ENCODE measurements at regions of chr16 and their contacts with region 1.

Region 1: GRCh38 chr16:7013990-7014389 is 318.7 kb upstream of the RBFOX1 start:
- DNase-seq: no peak
- H3K4me3 ChIP-seq: no peak overlapping the region
- H3K27ac ChIP-seq: no peak overlapping the region
- H3K4me1 ChIP-seq: no peaks in the 10 kb centered on the region
- H3K27me3 ChIP-seq: no peaks in the 10 kb centered on the region
- CTCF ChIP-seq: no peak
- POLR2A ChIP-seq: no peak

Region 2: GRCh38 chr16:6725634-6726331 is 288.2 kb before region 1 on chr16:
- intact Hi-C with region 1: loop called (anchors 10 kb)
- DNase-seq: no peak
- H3K4me3 ChIP-seq: no peak overlapping the region
- H3K27ac ChIP-seq: no peak overlapping the region
- H3K4me1 ChIP-seq: peaks cover 4 to 6% of the 10 kb centered on the region in 2 donors
- H3K27me3 ChIP-seq: no peaks in the 10 kb centered on the region
- CTCF ChIP-seq: peak in 3 of 6 experiments; percentile 48 to 59 (median 57)
- POLR2A ChIP-seq: no peak

Region 3: DNA sequence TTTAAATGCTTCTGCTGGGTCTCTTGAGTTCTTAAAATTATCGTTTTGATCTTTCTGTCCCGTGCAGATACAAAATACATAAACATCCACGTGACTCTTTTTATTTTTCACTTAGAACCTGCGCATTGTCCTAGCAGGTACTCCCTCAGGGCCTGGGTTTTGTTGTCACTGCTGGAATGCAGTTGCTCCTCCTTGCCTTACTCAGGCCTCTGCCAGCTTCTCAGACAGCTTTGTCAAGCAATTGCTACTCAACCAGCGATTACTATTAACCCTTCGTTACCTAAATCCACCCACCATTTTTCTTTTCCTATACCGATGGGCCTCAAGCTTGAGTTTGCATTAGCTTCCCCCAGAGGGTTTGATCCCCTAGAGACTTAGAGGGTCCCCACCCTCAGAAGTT is 87.2 kb before region 1 on chr16:
- intact Hi-C with region 1: no loop called
- DNase-seq: peak in 1 of 2 donors; percentile 41
- H3K4me3 ChIP-seq: no peak overlapping the region
- H3K27ac ChIP-seq: no peak overlapping the region
- H3K4me1 ChIP-seq: peaks cover 4 to 6% of the 10 kb centered on the region in 2 donors
- H3K27me3 ChIP-seq: no peaks in the 10 kb centered on the region
- CTCF ChIP-seq: no peak
- POLR2A ChIP-seq: no peak

Measured in thyroid gland (tissue), 4 donors.